Common myeloid progenitor, CD34-positive (primary cell): ENCODE measurements at regions of chr12 and their contacts with region 1.

Region 1: DNA sequence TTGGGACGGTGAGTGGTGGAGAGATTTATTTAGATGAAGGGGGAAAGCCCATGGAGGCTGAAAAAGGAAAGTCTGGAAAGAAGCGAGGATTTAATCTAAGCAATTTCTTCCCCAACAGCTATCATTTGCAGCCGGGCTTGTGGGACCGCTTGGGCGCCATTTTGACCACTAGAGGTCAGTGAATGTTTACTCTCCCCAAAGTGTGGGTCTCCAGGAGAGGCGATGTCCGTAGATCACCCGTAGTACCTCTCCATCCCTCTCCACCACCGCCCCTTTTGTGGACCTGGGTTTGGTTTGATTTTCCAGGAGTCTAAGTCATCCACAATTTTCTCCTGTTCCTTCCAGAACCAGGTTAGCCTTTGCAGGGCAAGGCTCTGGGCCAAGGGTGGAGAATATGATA is 91.2 kb upstream of the PARP11 start:
- DNase-seq: peak in 1 of 3 donors; percentile 26
- H3K4me3 ChIP-seq: no peak overlapping the region
- H3K27ac ChIP-seq: no peak overlapping the region
- H3K4me1 ChIP-seq: peaks cover 14 to 31% (median 20%) of the 10 kb centered on the region in 4 experiments
- H3K27me3 ChIP-seq: no peaks in the 10 kb centered on the region

Region 2: GRCh38 chr12:3496957-3497356 is 467.5 kb before region 1 on chr12:
- CTCF ChIA-PET with region 1: no interaction called
- POLR2A ChIA-PET with region 1: no interaction called
- DNase-seq: peak; percentile 20 to 36 (median 33)
- H3K4me3 ChIP-seq: no peak overlapping the region
- H3K27ac ChIP-seq: no peak overlapping the region
- H3K4me1 ChIP-seq: peaks cover 0 to 17% (median 14%) of the 10 kb centered on the region in 4 experiments
- H3K27me3 ChIP-seq: peaks cover 15 to 62% (median 29%) of the 10 kb centered on the region in 5 experiments

Region 3: DNA sequence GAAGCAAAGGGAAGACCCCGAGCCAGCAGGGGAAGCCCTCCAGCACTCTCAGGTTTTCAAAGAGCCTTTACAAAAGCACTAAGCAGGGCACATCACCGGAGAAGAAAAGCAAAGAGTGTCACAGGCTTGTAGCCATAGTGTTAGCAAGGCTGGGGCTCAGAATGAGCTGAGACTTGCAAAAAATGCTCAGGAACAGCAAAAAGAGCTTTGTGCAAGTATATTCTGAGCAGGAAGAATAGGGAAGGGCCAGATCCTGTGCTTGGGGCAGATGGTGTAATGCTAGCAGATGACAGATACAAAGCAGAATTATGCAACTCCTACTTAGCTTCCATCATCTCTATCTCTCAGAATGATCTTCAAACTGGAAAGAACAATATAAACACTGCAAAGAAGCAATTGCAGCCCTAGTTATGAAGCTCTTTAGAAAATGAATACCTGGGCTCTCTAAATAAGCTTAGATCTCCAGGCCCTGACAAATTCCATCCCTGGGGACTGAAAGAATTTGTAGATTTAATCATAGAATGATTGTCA is 67.6 kb before region 1 on chr12:
- CTCF ChIA-PET with region 1: interaction called, 181 read pairs
- POLR2A ChIA-PET with region 1: no interaction called
- DNase-seq: peak in 2 of 3 donors; percentile 64 to 69
- H3K4me3 ChIP-seq: peak overlapping the region in 1 of 7 experiments; percentile 43
- H3K27ac ChIP-seq: peak overlapping the region in 1 of 2 experiments; percentile 77
- H3K4me1 ChIP-seq: peaks cover 10 to 43% (median 27%) of the 10 kb centered on the region in 4 experiments
- H3K27me3 ChIP-seq: no peaks in the 10 kb centered on the region

Region 4: DNA sequence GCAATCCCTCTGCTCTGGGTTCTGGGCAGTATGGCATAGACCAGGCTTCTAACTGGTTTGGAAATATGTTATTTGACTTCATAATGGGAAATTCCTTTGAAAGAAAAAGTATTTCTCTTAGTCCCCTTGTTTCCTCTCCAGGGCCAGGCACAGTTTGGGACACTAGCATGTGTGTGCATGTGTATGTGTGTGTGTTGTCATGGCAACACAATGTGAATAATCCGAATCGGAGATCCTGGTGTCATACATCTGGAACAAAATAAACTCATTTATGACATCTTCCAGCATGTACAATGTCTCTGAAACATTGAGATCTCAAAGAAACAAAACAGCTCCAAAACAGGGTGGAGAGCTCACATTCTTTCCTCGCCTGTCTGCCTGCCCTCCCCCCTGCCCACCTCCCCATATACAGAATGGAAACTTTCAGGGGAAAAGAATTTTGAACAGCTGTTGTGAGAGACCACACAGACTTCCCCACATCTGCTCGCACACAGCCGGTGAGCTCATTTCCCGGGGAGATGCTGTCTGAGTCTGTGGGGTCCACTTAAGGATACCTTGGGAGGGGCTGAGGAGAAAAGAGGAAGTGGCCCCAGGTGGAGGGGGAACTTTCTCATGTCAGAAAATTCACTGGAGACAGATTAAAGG is 35.8 kb before region 1 on chr12:
- CTCF ChIA-PET with region 1: interaction called, 64 read pairs
- POLR2A ChIA-PET with region 1: interaction called, 26 read pairs
- DNase-seq: peak; percentile 90 to 99 (median 98)
- H3K4me3 ChIP-seq: peak overlapping the region in 3 of 7 experiments; percentile 16 to 38 (median 37)
- H3K27ac ChIP-seq: peak overlapping the region; percentile 78 to 86
- H3K4me1 ChIP-seq: peaks cover 20 to 64% (median 60%) of the 10 kb centered on the region in 4 experiments
- H3K27me3 ChIP-seq: no peaks in the 10 kb centered on the region

Region 5: GRCh38 chr12:3947781-3948180 is 16.7 kb before region 1 on chr12:
- CTCF ChIA-PET with region 1: interaction called, 16 read pairs
- POLR2A ChIA-PET with region 1: no interaction called
- DNase-seq: peak in 2 of 3 donors; percentile 59 to 78
- H3K4me3 ChIP-seq: no peak overlapping the region
- H3K27ac ChIP-seq: no peak overlapping the region
- H3K4me1 ChIP-seq: peaks cover 0 to 10% (median 6%) of the 10 kb centered on the region in 4 experiments
- H3K27me3 ChIP-seq: no peaks in the 10 kb centered on the region

Region 6: DNA sequence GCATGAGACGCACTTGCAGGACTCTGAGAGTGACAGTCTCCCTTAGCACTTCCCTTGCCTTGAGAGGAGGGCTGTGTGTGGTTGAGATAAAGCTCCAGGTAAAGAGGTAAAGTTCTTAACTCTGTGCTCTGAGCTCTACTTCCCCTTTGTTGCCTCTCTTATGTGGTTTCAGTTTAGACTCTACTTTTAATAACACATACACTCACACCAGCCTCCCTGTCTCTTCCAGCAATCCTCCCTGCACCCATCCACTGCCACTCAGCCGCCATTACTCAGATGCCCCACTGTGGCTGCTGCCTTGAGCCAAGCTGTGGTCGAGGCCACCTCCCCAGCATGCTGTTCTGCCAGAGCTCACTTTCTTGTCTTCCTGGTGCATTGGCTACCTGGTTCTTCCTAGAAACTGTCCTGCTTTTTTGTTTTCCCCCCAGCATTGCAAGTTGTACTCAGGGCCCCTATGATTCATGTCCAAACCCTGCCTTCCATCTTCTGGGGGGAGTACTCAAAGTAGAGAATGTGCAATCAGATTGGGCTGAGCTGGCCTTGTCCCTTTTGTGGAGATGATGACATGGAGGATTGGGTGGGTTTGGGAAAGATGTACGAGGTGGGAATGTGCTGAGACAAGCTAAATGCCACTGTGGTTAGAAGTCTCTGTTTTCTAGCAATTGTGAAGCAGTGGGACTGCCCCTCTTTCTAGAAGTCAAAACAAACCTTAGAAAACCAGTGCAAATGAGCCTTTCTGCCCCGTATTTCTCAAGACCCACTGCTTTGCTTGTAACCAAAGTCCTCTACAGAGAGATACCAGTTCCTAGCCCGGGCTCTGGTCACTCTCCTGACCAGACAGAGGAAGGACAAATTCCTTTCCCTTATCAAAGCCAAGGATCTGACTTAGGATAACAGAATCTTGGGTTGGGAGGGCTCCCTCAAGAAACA is 24.3 kb after region 1 on chr12:
- CTCF ChIA-PET with region 1: interaction called, 49 read pairs
- POLR2A ChIA-PET with region 1: interaction called, 5 read pairs
- DNase-seq: peak; percentile 36 to 87 (median 82)
- H3K4me3 ChIP-seq: peak overlapping the region in 2 of 7 experiments; percentile 37 to 47
- H3K27ac ChIP-seq: peak overlapping the region in 1 of 2 experiments; percentile 29
- H3K4me1 ChIP-seq: peaks cover 3 to 13% (median 6%) of the 10 kb centered on the region in 4 experiments
- H3K27me3 ChIP-seq: no peaks in the 10 kb centered on the region

Region 7: DNA sequence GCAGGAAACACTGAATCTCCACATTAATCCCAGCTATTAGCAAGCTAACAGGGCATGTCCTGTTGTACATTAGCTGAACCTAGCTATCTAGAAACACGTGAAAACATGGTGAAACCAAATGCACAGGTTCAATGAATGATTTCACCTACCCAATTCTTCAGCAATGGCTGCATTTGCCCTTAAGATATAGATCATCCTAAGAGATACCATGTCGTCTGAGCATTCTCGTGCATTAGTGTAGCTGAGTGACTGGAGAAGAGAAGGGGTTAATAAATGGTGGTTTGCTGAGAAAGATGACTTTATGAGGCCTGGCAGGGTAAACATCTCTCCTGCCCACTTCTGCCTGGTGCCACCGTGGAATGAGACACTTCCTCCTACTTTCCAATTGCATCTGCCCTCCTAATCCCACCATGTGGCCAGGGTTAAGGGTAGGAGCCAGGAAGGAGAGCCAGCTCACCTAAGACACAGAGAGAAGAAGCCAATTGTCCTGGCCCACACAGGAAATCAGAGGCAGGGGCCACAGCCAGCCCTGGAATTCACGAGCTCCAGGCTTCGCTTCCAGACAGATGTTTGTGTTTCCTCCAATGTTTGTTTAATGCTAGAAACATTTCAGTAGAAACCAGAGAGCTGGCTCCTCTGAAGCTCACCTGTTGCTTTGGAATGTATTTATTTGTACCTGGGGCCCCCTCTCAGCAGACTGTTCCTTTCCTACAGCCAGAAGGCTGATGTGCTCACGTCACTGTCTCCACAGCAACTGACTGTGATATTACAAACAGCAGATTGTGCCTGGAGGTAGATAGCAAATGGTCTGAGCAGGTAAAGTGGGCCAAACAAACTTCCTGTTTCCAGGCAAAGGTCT is 34.8 kb after region 1 on chr12:
- CTCF ChIA-PET with region 1: interaction called, 13 read pairs
- POLR2A ChIA-PET with region 1: no interaction called
- DNase-seq: peak in 2 of 3 donors; percentile 16 to 24
- H3K4me3 ChIP-seq: no peak overlapping the region
- H3K27ac ChIP-seq: no peak overlapping the region
- H3K4me1 ChIP-seq: peaks cover 0 to 13% (median 6%) of the 10 kb centered on the region in 4 experiments
- H3K27me3 ChIP-seq: no peaks in the 10 kb centered on the region

Region 8: DNA sequence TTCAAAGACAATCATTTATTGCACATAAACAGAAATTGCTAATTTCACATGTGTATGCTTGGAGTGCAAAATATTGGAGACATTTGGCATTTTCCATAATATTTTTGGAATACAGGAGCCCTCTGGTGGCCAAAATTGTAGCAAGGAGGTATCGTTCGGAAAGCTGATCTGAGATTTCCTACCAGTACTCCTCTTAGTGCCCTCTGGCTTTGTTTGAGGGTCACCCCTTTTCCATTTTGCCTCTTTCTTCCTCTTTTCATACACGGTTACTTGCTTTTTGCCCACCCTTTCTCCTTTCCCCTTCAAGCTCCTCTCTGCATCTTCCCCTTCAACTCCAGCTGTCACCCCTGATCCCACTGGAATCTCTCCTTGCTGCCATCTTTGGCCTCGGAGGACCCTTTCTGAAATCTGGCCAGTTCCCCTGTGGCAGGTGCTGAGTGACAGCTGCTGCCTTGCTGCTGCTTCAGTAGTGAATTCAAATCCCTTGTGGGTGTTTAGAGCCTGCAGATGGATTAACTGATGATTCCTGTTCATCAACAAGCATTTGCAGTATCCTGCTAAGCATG is 73.4 kb after region 1 on chr12:
- CTCF ChIA-PET with region 1: interaction called, 22 read pairs
- POLR2A ChIA-PET with region 1: no interaction called
- DNase-seq: peak; percentile 28 to 49 (median 48)
- H3K4me3 ChIP-seq: no peak overlapping the region
- H3K27ac ChIP-seq: no peak overlapping the region
- H3K4me1 ChIP-seq: peaks cover 0 to 6% (median 0%) of the 10 kb centered on the region in 4 experiments
- H3K27me3 ChIP-seq: no peaks in the 10 kb centered on the region